GM12878 (cell line): ENCODE measurements at regions of chr15 and their contacts with region 1.

Region 1: GRCh38 chr15:47987908-47988532 is 132.8 kb upstream of the SLC24A5 start:
- DNase-seq: peak; percentile 38
- ATAC-seq: peak; percentile 99
- H3K4me3 ChIP-seq: no peak overlapping the region
- H3K27ac ChIP-seq: no peak overlapping the region
- H3K4me1 ChIP-seq: no peaks in the 10 kb centered on the region
- H3K27me3 ChIP-seq: no peaks in the 10 kb centered on the region
- CTCF ChIP-seq: peak; percentile 46 to 80 (median 59); a peak in 5 of 6 replicates
- EP300 ChIP-seq: no peak
- POLR2A ChIP-seq: no peak
- RAD21 ChIP-seq: peak; percentile 95

Region 2: GRCh38 chr15:46312133-46312740 is 1675.8 kb before region 1 on chr15:
- CTCF ChIA-PET with region 1: interaction called, 4 read pairs
- POLR2A ChIA-PET with region 1: no interaction called
- RAD21 ChIA-PET with region 1: no interaction called
- SMC1A ChIA-PET with region 1: no interaction called
- in situ Hi-C with region 1: loop called (anchors 25 kb)
- intact Hi-C with region 1: no loop called
- DNase-seq: peak; percentile 11
- ATAC-seq: peak; percentile 94
- H3K4me3 ChIP-seq: no peak overlapping the region
- H3K27ac ChIP-seq: no peak overlapping the region
- H3K4me1 ChIP-seq: no peaks in the 10 kb centered on the region
- H3K27me3 ChIP-seq: no peaks in the 10 kb centered on the region
- CTCF ChIP-seq: peak; percentile 63 to 80 (median 67)
- EP300 ChIP-seq: no peak
- POLR2A ChIP-seq: no peak
- RAD21 ChIP-seq: peak; percentile 96

Region 3: GRCh38 chr15:47473832-47474231 is 514.2 kb before region 1 on chr15:
- CTCF ChIA-PET with region 1: interaction called, 3 read pairs
- POLR2A ChIA-PET with region 1: no interaction called
- RAD21 ChIA-PET with region 1: interaction called, 3 read pairs
- SMC1A ChIA-PET with region 1: interaction called, 3 read pairs
- in situ Hi-C with region 1: loop called (anchors 10 kb)
- intact Hi-C with region 1: loop called (anchors 1 kb)
- DNase-seq: no peak
- ATAC-seq: no peak
- H3K4me3 ChIP-seq: no peak overlapping the region
- H3K27ac ChIP-seq: no peak overlapping the region
- H3K4me1 ChIP-seq: no peaks in the 10 kb centered on the region
- H3K27me3 ChIP-seq: no peaks in the 10 kb centered on the region
- CTCF ChIP-seq: no peak
- EP300 ChIP-seq: no peak
- POLR2A ChIP-seq: no peak
- RAD21 ChIP-seq: no peak

Region 4: GRCh38 chr15:47908950-47909670 is 78.9 kb before region 1 on chr15:
- CTCF ChIA-PET with region 1: interaction called, 28 read pairs
- POLR2A ChIA-PET with region 1: no interaction called
- RAD21 ChIA-PET with region 1: interaction called, 16 read pairs
- SMC1A ChIA-PET with region 1: interaction called, 18 read pairs
- in situ Hi-C with region 1: no loop called
- intact Hi-C with region 1: loop called (anchors 5 kb)
- DNase-seq: no peak
- ATAC-seq: no peak
- H3K4me3 ChIP-seq: no peak overlapping the region
- H3K27ac ChIP-seq: no peak overlapping the region
- H3K4me1 ChIP-seq: no peaks in the 10 kb centered on the region
- H3K27me3 ChIP-seq: no peaks in the 10 kb centered on the region; a peak in 1 of 4 replicates
- CTCF ChIP-seq: no peak
- EP300 ChIP-seq: no peak
- POLR2A ChIP-seq: no peak
- RAD21 ChIP-seq: no peak

Region 5: GRCh38 chr15:48084759-48085590 is 97.0 kb after region 1 on chr15:
- CTCF ChIA-PET with region 1: interaction called, 18 read pairs
- POLR2A ChIA-PET with region 1: no interaction called
- RAD21 ChIA-PET with region 1: interaction called, 13 read pairs
- SMC1A ChIA-PET with region 1: interaction called, 10 read pairs
- in situ Hi-C with region 1: no loop called
- intact Hi-C with region 1: loop called (anchors 5 kb)
- DNase-seq: no peak
- ATAC-seq: peak; percentile 72
- H3K4me3 ChIP-seq: no peak overlapping the region
- H3K27ac ChIP-seq: no peak overlapping the region
- H3K4me1 ChIP-seq: no peaks in the 10 kb centered on the region
- H3K27me3 ChIP-seq: no peaks in the 10 kb centered on the region
- CTCF ChIP-seq: peak; percentile 44 to 52 (median 50)
- EP300 ChIP-seq: no peak
- POLR2A ChIP-seq: no peak
- RAD21 ChIP-seq: peak; percentile 59